ENCODE measurements at regions of chr12 and their contacts with region 1.

Region 1: GRCh38 chr12:8860165-8860961 is 37.9 kb downstream of the A2ML1 start:
- DNase-seq: peak; percentile 57
- H3K4me3 Mint-ChIP-seq: no peak overlapping the region
- H3K27ac Mint-ChIP-seq: no peak overlapping the region
- H3K4me1 Mint-ChIP-seq: no peaks in the 10 kb centered on the region
- H3K27me3 Mint-ChIP-seq: no peaks in the 10 kb centered on the region

Region 2: GRCh38 chr12:8662593-8662992 is 197.8 kb before region 1 on chr12 and contains the start of gene MFAP5:
- CTCF ChIA-PET with region 1: interaction called, 24 read pairs
- intact Hi-C with region 1: no loop called
- DNase-seq: no peak
- H3K4me3 Mint-ChIP-seq: no peak within 1 kb of the TSS
- H3K27ac Mint-ChIP-seq: no peak within 1 kb of the TSS
- H3K4me1 Mint-ChIP-seq: no peaks in the 10 kb centered on the region
- H3K27me3 Mint-ChIP-seq: peaks cover 5% of the 10 kb centered on the region
- total RNA-seq, gene MFAP5: not detected

Region 3: DNA sequence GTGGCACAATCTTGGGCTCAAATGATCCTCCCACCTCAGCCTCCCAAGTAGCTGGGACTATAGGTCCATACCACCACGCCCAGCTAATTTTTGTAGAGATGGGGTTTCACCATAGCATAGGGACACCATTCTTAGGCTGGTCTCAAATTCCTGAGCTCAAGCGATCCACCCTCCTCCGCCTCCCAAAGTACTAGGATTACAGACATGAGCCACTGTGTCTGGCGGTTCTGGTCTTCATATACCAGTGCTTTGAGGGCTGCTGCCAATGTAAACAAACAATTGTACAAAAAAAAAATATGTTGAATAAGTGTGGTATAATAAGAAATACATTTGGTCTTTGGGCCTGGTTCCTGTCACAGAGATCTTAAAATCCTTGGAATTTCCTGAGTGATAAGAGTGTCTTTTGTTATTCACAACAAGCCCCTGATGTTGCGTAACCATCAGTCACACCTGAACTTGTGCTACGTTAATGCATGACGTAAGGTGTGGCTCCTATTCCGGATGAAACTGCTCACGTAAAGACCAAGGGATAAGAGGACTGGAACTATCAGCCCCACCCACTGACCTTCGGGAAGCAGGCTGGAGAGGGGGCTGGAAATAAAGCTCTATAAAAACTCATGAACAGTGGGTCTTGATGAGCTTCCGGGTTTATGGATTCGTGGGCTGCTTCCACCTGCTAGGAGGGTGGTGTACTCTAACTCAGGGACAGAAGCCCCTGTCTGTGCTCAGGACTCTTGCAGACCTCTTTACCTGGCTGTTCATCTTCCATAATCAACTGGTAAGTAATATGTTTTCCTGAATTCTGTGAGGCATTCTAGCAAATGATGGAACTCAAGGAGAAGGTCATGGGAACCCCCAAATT is 179.1 kb before region 1 on chr12:
- CTCF ChIA-PET with region 1: interaction called, 15 read pairs
- intact Hi-C with region 1: loop called (anchors 1 kb)
- DNase-seq: no peak
- H3K4me3 Mint-ChIP-seq: no peak overlapping the region
- H3K27ac Mint-ChIP-seq: no peak overlapping the region
- H3K4me1 Mint-ChIP-seq: peaks cover 4% of the 10 kb centered on the region
- H3K27me3 Mint-ChIP-seq: no peaks in the 10 kb centered on the region

Region 4: DNA sequence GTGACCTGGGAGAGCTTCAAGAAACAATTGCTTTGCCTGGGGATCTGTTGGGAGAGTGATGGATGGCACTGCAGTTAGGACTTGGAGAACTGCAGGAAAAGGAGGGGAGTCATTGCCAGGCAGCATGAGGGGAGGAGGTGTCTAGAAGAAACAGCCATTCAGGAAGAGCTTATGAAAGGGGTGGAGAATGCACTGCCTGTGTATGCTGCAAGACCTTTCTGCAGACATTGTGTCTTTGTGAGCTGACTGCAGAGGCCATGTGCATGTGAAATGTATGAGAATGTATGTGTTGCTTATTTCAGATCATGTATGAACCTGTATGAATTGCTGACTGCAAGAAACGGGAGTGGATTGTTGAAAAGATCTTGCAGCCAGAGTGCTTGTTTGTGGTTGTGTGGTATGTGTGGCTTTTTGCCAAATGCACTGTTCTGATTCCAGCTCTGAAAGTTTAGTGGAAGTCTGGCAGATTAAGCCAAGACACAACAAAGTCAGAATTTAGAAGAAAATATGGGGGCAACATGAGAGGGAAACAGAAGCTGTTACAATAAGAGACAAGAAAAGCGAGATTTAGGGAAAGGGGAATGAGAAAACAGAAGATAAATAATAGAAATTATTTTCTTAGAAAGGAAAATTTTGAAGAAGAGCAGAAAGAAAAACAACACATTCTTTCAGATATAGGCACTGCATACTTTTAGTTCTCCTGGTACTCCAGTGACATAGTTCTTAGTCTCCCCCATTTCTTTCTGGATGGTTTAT is 172.3 kb before region 1 on chr12:
- CTCF ChIA-PET with region 1: interaction called, 15 read pairs
- intact Hi-C with region 1: no loop called
- DNase-seq: no peak
- H3K4me3 Mint-ChIP-seq: no peak overlapping the region
- H3K27ac Mint-ChIP-seq: no peak overlapping the region
- H3K4me1 Mint-ChIP-seq: peaks cover 6% of the 10 kb centered on the region
- H3K27me3 Mint-ChIP-seq: no peaks in the 10 kb centered on the region

Region 5: DNA sequence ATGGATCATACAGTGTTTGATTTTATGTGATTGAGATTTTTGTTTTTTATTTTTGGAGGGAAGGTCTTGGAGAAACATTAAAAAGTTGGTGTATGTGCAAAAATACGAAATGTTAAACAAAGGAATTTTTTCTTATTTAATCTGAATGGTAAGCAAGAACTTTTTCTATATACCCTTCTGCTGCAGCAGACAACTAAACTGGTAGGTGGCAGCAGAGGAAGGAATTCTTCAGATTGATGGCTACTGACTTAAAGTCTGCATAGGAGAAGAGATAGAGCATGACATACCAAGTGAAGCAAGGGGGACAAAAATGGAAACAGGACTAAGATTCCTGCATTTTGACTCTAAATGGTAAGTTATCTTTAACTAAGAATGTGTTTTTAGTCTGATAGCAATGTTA is 80.0 kb before region 1 on chr12:
- CTCF ChIA-PET with region 1: no interaction called
- intact Hi-C with region 1: loop called (anchors 2 kb)
- DNase-seq: peak; percentile 6
- H3K4me3 Mint-ChIP-seq: no peak overlapping the region
- H3K27ac Mint-ChIP-seq: no peak overlapping the region
- H3K4me1 Mint-ChIP-seq: no peaks in the 10 kb centered on the region
- H3K27me3 Mint-ChIP-seq: no peaks in the 10 kb centered on the region